ENCODE measurements at regions of chr3 and their contacts with region 1.

Region 1: GRCh38 chr3:111539351-111540331 is 2.4 kb upstream of the CD96 start:
- DNase-seq: peak; percentile 32 to 69 (median 57)
- ATAC-seq: peak; percentile 54
- H3K4me3 ChIP-seq: peak overlapping the region; percentile 40
- H3K4me3 Mint-ChIP-seq: peak overlapping the region; percentile 77 to 92 (median 82)
- H3K27ac ChIP-seq: peak overlapping the region; percentile 42
- H3K27ac Mint-ChIP-seq: peak overlapping the region in 5 of 9 donors; percentile 78 to 99 (median 98)
- H3K4me1 ChIP-seq: peaks cover 33 to 38% of the 10 kb centered on the region in 2 donors
- H3K4me1 Mint-ChIP-seq: peaks cover 27 to 65% (median 55%) of the 10 kb centered on the region in 7 donors
- H3K27me3 ChIP-seq: no peaks in the 10 kb centered on the region
- H3K27me3 Mint-ChIP-seq: no peaks in the 10 kb centered on the region

Region 2: DNA sequence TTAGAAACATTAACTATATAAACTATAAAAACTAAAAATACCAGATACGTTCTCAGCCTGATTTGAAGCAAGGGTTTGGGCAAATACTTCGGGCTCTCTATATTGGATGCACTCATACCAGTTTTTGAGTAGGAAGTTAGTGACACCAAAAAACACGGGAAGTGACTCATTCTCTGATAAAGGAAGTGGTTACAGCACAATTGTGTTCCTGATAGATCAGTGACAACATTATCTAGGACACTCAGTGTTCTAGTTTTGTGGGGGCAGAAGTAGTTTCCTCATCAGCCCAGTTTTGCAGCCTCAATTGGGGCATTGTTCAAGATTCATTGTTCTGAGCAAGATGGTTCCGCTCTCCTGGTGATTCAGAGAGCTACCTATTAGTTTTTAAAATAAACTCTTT is 1732.7 kb before region 1 on chr3:
- CTCF ChIA-PET with region 1: interaction called, 3 read pairs
- POLR2A ChIA-PET with region 1: no interaction called
- intact Hi-C with region 1: loop called in 1 of 2 experiments (anchors 2 kb)
- DNase-seq: peak in 8 of 9 donors; percentile 28 to 76 (median 66)
- ATAC-seq: peak; percentile 94
- H3K4me3 ChIP-seq: peak overlapping the region; percentile 4
- H3K4me3 Mint-ChIP-seq: peak overlapping the region; percentile 14 to 88 (median 76)
- H3K27ac ChIP-seq: peak overlapping the region; percentile 52
- H3K27ac Mint-ChIP-seq: peak overlapping the region; percentile 85 to 97 (median 89)
- H3K4me1 ChIP-seq: peaks cover 29 to 44% of the 10 kb centered on the region in 2 donors
- H3K4me1 Mint-ChIP-seq: peaks cover 18 to 62% (median 46%) of the 10 kb centered on the region in 7 donors
- H3K27me3 ChIP-seq: no peaks in the 10 kb centered on the region
- H3K27me3 Mint-ChIP-seq: peaks cover 0 to 7% (median 0%) of the 10 kb centered on the region in 5 donors

Region 3: GRCh38 chr3:111012388-111013248 is 527.0 kb before region 1 on chr3:
- CTCF ChIA-PET with region 1: interaction called, 4 read pairs
- POLR2A ChIA-PET with region 1: no interaction called
- intact Hi-C with region 1: loop called (anchors 5 kb)
- DNase-seq: no peak
- ATAC-seq: no peak
- H3K4me3 ChIP-seq: no peak overlapping the region
- H3K4me3 Mint-ChIP-seq: no peak overlapping the region
- H3K27ac ChIP-seq: no peak overlapping the region
- H3K27ac Mint-ChIP-seq: no peak overlapping the region
- H3K4me1 ChIP-seq: no peaks in the 10 kb centered on the region
- H3K4me1 Mint-ChIP-seq: peaks cover 0 to 2% (median 0%) of the 10 kb centered on the region in 7 donors
- H3K27me3 ChIP-seq: no peaks in the 10 kb centered on the region
- H3K27me3 Mint-ChIP-seq: peaks cover 7 to 24% (median 11%) of the 10 kb centered on the region in 5 donors

Region 4: DNA sequence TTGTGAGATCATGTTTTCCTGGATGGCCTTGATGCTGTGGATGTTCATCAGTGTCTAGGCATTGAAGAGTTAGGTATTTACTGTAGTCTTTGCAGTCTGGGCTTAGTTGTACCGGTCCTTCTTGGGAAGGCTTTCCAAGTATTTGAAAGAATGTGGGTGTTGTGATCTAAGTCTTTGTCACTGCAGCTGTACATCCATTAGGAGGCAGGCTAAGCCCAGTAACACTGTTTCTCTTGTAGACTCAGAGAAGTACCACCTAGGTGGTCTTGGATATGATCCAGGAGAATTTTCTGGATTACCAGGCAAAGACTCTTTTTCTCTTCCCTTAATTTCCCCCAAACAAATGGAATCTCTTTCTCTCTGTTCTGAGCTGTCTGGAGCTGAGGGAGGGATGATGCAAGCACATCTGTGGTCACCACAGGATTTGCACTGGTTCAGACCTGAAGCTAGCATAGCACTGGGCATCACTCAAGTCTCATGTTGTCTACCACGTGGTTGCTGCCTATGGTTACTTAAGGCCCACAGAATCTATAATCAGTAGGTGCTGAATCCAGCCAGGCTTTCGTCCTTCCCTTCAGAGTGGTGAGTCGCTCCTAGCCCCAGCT is 240.5 kb before region 1 on chr3:
- CTCF ChIA-PET with region 1: interaction called, 3 read pairs
- POLR2A ChIA-PET with region 1: no interaction called
- intact Hi-C with region 1: loop called in 1 of 2 experiments (anchors 1 kb)
- DNase-seq: no peak
- ATAC-seq: no peak
- H3K4me3 ChIP-seq: no peak overlapping the region
- H3K4me3 Mint-ChIP-seq: no peak overlapping the region
- H3K27ac ChIP-seq: no peak overlapping the region
- H3K27ac Mint-ChIP-seq: no peak overlapping the region
- H3K4me1 ChIP-seq: no peaks in the 10 kb centered on the region
- H3K4me1 Mint-ChIP-seq: peaks cover 9 to 62% (median 17%) of the 10 kb centered on the region in 7 donors
- H3K27me3 ChIP-seq: no peaks in the 10 kb centered on the region
- H3K27me3 Mint-ChIP-seq: peaks cover 0 to 5% (median 3%) of the 10 kb centered on the region in 5 donors

Region 5: GRCh38 chr3:111594205-111594604 is 54.6 kb after region 1 on chr3:
- CTCF ChIA-PET with region 1: interaction called, 3 read pairs
- POLR2A ChIA-PET with region 1: no interaction called
- intact Hi-C with region 1: loop called in 1 of 2 experiments (anchors 2 kb)
- DNase-seq: no peak
- ATAC-seq: no peak
- H3K4me3 ChIP-seq: no peak overlapping the region
- H3K4me3 Mint-ChIP-seq: peak overlapping the region in 1 of 10 donors; percentile 83
- H3K27ac ChIP-seq: no peak overlapping the region
- H3K27ac Mint-ChIP-seq: peak overlapping the region in 8 of 9 donors; percentile 3 to 91 (median 20)
- H3K4me1 ChIP-seq: peaks cover 0 to 21% of the 10 kb centered on the region in 2 donors
- H3K4me1 Mint-ChIP-seq: peaks cover 11 to 84% (median 24%) of the 10 kb centered on the region in 7 donors
- H3K27me3 ChIP-seq: no peaks in the 10 kb centered on the region
- H3K27me3 Mint-ChIP-seq: no peaks in the 10 kb centered on the region

Region 6: GRCh38 chr3:111967651-111968274 is 428.1 kb after region 1 on chr3:
- CTCF ChIA-PET with region 1: interaction called, 4 read pairs
- POLR2A ChIA-PET with region 1: no interaction called
- intact Hi-C with region 1: loop called in 1 of 2 experiments (anchors 1 kb)
- DNase-seq: peak; percentile 44 to 72 (median 64)
- ATAC-seq: peak; percentile 96
- H3K4me3 ChIP-seq: no peak overlapping the region
- H3K4me3 Mint-ChIP-seq: peak overlapping the region in 2 of 10 donors; percentile 12 to 44
- H3K27ac ChIP-seq: no peak overlapping the region
- H3K27ac Mint-ChIP-seq: peak overlapping the region in 1 of 9 donors; percentile 71
- H3K4me1 ChIP-seq: peaks cover 0 to 4% of the 10 kb centered on the region in 2 donors
- H3K4me1 Mint-ChIP-seq: peaks cover 3 to 13% (median 5%) of the 10 kb centered on the region in 7 donors
- H3K27me3 ChIP-seq: no peaks in the 10 kb centered on the region
- H3K27me3 Mint-ChIP-seq: no peaks in the 10 kb centered on the region

Region 7: GRCh38 chr3:112561731-112562688 is 1022.4 kb after region 1 on chr3 and contains the starts of genes ATG3 and SLC35A5:
- CTCF ChIA-PET with region 1: no interaction called
- POLR2A ChIA-PET with region 1: no interaction called
- intact Hi-C with region 1: loop called in 1 of 2 experiments (anchors 10 kb)
- DNase-seq: peak; percentile 97 to 100 (median 99)
- ATAC-seq: peak; percentile 88
- H3K4me3 ChIP-seq: peak within 1 kb of the TSS; percentile 86
- H3K4me3 Mint-ChIP-seq: peak within 1 kb of the TSS; percentile 93 to 100 (median 98)
- H3K27ac ChIP-seq: peak within 1 kb of the TSS; percentile 91
- H3K27ac Mint-ChIP-seq: peak within 1 kb of the TSS; percentile 96 to 100 (median 99)
- H3K4me1 ChIP-seq: peaks cover 13 to 15% of the 10 kb centered on the region in 2 donors
- H3K4me1 Mint-ChIP-seq: peaks cover 25 to 73% (median 58%) of the 10 kb centered on the region in 7 donors
- H3K27me3 ChIP-seq: no peaks in the 10 kb centered on the region
- H3K27me3 Mint-ChIP-seq: no peaks in the 10 kb centered on the region
- total RNA-seq, gene ATG3: 35.1 to 65.8 (median 50.3) TPM
- total RNA-seq, gene SLC35A5: 10.4 to 24.6 (median 20.8) TPM

Measured in naive thymus-derived CD4-positive, alpha-beta T cell (primary cell).